A673 (cell line): ENCODE measurements at regions of chr4 and their contacts with region 1.

Region 1: DNA sequence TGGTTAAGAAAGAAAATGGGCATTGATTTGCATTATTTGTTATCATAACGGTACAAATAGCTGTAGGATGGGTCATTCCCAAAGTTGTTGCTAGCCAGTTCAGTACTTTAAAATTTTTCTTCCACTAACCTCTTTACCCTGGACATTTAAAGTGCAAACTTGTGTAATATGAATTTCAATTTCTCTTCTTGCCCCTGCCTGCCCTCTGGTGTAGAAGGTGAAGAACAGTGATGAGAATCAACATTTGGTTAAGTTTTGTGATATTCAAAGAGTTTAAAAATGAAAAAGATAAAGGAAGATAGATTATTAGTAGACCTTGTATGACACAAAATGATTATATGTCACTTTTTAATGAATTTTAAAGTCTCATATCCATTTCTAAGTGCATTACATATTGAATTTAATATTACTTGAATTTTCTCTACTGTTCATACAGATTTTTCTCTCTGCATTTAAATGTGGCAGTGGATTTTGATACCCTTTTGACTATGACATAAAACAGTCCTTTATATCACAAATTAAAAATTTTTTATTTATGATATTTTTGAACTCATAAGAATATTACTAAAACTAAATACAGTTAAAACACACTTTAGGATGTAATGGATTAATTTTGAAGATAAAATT is 337.7 kb downstream of the BMPR1B start:
- DNase-seq: peak; percentile 63
- H3K4me3 ChIP-seq: no peak overlapping the region
- H3K27ac ChIP-seq: no peak overlapping the region
- H3K4me1 ChIP-seq: peaks cover 26% of the 10 kb centered on the region
- H3K27me3 ChIP-seq: no peaks in the 10 kb centered on the region
- CTCF ChIP-seq: peak; percentile 61

Region 2: DNA sequence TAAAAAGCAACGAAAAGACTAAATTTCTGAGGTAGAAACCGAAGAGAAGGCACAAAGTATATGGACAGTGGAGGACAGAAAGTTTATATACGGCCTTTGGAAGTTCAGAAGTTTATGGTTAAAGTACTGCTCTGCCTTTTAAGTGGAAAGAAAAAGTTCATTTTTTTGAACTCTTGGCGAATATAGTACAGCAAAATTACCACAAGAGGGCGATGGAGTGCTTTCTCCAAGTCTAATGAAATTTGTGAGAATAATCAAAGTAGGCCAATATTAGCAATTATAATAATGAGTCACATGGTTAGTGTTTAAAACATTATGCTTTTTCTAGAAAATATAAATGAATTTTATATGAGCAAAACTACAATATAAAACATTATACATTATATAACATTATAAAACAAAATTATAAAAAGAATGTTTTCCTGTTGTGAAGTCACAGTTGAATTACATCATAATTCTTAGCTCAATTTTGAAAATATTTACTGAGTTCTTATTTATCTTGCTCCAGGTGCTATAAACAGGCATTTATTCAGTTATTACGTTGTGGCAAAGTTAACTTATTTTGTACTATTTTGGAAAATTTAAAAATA is 473.9 kb before region 1 on chr4:
- CTCF ChIA-PET with region 1: no interaction called
- POLR2A ChIA-PET with region 1: no interaction called
- intact Hi-C with region 1: loop called (anchors 5 kb)
- DNase-seq: peak; percentile 34
- H3K4me3 ChIP-seq: no peak overlapping the region
- H3K27ac ChIP-seq: no peak overlapping the region
- H3K4me1 ChIP-seq: peaks cover 12% of the 10 kb centered on the region
- H3K27me3 ChIP-seq: no peaks in the 10 kb centered on the region
- CTCF ChIP-seq: peak; percentile 66

Region 3: DNA sequence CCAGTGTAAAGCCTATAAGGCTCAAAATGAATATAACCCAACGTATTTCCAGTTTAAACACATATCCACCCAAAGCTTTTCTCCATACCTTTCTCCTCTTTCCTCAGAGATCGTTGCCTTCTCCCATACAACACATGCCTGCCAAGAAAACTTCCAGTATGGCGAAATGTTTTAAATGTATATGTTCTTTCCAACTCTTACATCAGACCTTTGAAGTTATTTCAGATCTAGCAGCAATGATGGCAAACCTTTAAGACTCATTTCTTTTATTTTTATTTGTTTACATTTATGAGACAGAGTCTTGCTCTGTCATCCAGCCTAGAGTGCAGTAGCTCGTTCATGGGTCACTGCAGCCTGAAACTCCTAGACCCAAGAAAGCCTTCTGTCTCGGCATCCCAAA is 72.4 kb before region 1 on chr4:
- CTCF ChIA-PET with region 1: no interaction called
- POLR2A ChIA-PET with region 1: no interaction called
- intact Hi-C with region 1: no loop called
- DNase-seq: no peak
- H3K4me3 ChIP-seq: no peak overlapping the region
- H3K27ac ChIP-seq: no peak overlapping the region
- H3K4me1 ChIP-seq: no peaks in the 10 kb centered on the region
- H3K27me3 ChIP-seq: no peaks in the 10 kb centered on the region
- CTCF ChIP-seq: no peak

Region 4: GRCh38 chr4:96448315-96448872 is 1352.9 kb after region 1 on chr4:
- CTCF ChIA-PET with region 1: no interaction called
- POLR2A ChIA-PET with region 1: no interaction called
- intact Hi-C with region 1: no loop called
- DNase-seq: no peak
- H3K4me3 ChIP-seq: no peak overlapping the region
- H3K27ac ChIP-seq: no peak overlapping the region
- H3K4me1 ChIP-seq: no peaks in the 10 kb centered on the region
- H3K27me3 ChIP-seq: no peaks in the 10 kb centered on the region
- CTCF ChIP-seq: no peak